PC-3 (cell line): ENCODE measurements at regions of chr5 and their contacts with region 1.

Region 1: GRCh38 chr5:60444661-60445360 is 255.2 kb downstream of the DEPDC1B start:
- DNase-seq: no peak
- ATAC-seq: no peak
- H3K4me3 ChIP-seq: no peak overlapping the region
- H3K27ac ChIP-seq: no peak overlapping the region
- H3K4me1 ChIP-seq: no peaks in the 10 kb centered on the region
- H3K27me3 ChIP-seq: peaks cover 16% of the 10 kb centered on the region
- CTCF ChIP-seq: no peak

Region 2: DNA sequence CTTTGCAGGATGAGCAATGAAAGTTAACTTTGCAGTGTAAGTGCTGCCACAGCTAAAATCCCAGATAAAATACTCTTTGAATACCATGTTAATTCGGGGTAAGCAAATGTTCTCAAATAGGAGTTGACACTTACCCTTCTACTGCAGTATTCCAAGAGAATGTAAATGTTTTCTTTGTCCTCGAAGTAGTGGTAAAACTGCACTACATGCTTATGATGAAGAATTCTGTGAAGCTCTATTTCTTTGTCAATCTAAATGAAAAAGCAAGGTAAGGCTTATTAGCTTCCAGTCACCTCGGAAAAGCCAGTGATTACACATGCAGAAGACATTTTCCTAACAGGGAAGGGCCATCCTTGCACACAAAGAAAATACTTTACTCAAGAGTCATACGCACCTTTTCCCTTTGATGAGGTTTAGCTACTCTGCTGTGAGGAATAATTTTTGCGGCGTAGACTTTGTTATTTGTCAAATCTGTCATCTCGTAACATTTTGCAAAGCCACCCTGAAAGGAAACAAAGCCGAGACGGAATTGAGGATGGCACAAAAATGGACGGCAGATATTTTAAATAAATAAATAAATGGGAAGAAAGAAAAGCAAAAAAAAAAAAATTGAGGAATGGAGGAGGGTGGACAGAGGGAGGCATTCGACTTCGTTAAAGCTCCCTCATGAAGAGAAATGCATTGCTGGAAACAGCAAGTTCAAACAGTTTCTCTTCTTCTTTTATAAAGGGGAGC is 1986.1 kb before region 1 on chr5:
- CTCF ChIA-PET with region 1: no interaction called
- POLR2A ChIA-PET with region 1: no interaction called
- intact Hi-C with region 1: no loop called
- DNase-seq: peak; percentile 55
- ATAC-seq: no peak
- H3K4me3 ChIP-seq: peak overlapping the region; percentile 99
- H3K27ac ChIP-seq: peak overlapping the region; percentile 84
- H3K4me1 ChIP-seq: peaks cover 46% of the 10 kb centered on the region
- H3K27me3 ChIP-seq: no peaks in the 10 kb centered on the region
- CTCF ChIP-seq: no peak

Region 3: DNA sequence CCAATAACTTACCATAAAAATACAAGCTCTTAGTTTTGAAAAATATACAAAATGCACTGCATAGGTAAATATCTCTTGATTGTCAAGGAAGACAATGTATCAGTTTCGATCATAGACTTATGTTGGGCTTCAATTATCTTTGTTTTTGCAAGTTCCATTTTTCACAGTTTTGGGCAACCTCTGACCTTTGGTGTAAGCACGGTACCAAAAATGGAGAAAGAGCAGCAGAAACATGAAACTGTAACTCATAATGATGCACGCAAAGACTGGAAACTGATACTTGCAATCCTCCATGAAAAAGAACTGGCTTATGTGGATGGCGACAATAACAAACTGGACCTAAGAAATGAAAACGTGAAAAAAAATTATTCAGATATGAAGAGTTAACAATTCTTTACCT is 309.7 kb after region 1 on chr5:
- CTCF ChIA-PET with region 1: no interaction called
- POLR2A ChIA-PET with region 1: no interaction called
- intact Hi-C with region 1: loop called (anchors 5 kb)
- DNase-seq: no peak
- ATAC-seq: no peak
- H3K4me3 ChIP-seq: no peak overlapping the region
- H3K27ac ChIP-seq: no peak overlapping the region
- H3K4me1 ChIP-seq: no peaks in the 10 kb centered on the region
- H3K27me3 ChIP-seq: peaks cover 8% of the 10 kb centered on the region; the same call in 1 of the 2 replicates
- CTCF ChIP-seq: no peak